ENCODE measurements at regions of chr13 and their contacts with region 1.

Region 1: DNA sequence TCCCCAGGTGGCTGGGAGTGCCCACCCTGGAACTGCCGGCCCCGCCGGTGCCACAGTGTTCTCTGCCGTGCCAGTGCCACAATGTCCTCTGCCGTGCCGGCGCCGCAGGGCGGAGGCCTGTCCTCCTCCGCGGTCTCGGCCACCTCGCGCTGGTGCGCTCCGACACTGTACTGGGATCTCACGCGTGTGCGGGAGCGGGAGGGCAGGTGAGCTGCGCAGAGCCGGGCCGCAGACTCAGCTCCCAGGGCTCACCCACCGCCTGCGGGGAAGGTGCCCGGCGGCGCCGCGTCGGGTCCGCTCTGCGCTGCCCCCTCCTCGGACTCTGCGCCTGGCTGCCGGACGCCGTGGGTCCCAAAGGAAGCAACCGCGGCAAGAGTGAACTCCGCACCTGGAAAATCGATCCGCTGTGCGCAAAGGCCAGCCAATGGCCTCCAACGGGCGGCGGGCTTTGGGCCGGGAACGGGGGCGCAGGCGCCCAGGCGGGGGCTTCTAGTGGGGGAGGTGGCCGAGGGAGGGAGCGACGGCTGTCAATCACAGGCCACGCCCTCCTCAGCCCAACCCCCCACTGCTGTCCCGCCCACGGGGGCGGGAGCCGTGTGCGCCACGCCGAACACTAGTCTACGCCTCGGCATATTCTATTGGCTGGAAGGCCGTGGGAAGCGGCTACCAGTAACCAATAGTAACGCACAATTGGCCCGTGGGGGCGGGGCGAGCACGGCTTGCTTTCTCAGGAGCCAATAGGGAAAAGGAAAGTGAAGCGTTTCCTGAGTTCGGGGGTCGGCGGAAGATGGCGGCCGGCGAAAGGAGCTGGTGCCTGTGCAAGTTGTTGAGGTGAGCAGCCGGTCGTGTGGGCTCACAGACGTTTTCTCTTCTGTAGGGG is at the start of gene ALG11:
- DNase-seq: peak; percentile 99
- ATAC-seq: peak; percentile 98
- H3K4me3 ChIP-seq: peak within 1 kb of the TSS; percentile 84 to 92 (median 88)
- H3K27ac ChIP-seq: peak within 1 kb of the TSS; percentile 83 to 90 (median 86)
- H3K4me1 ChIP-seq: peaks cover 24 to 25% of the 10 kb centered on the region in 2 donors
- H3K27me3 ChIP-seq: no peaks in the 10 kb centered on the region
- CTCF ChIP-seq: peak in 1 of 5 experiments; percentile 23
- POLR2A ChIP-seq: peak; percentile 44 to 64
- total RNA-seq, gene ALG11: 8.9 to 14.2 (median 10.1) TPM

Region 2: GRCh38 chr13:52194184-52194868 is 182.5 kb after region 1 on chr13:
- in situ Hi-C with region 1: no loop called
- intact Hi-C with region 1: loop called (anchors 2 kb)
- DNase-seq: peak; percentile 69 to 81
- ATAC-seq: peak; percentile 93 to 94
- H3K4me3 ChIP-seq: peak overlapping the region; percentile 74 to 98 (median 88)
- H3K27ac ChIP-seq: peak overlapping the region; percentile 81 to 88 (median 87)
- H3K4me1 ChIP-seq: peaks cover 11 to 25% of the 10 kb centered on the region in 2 donors
- H3K27me3 ChIP-seq: no peaks in the 10 kb centered on the region
- CTCF ChIP-seq: no peak
- POLR2A ChIP-seq: peak in 1 of 2 donors; percentile 22

Region 3: GRCh38 chr13:52428295-52428694 is 416.4 kb after region 1 on chr13:
- in situ Hi-C with region 1: loop called in 1 of 4 experiments (anchors 25 kb)
- intact Hi-C with region 1: no loop called
- DNase-seq: no peak
- ATAC-seq: peak; percentile 50 to 61
- H3K4me3 ChIP-seq: no peak overlapping the region
- H3K27ac ChIP-seq: peak overlapping the region in 1 of 4 donors; percentile 20
- H3K4me1 ChIP-seq: no peaks in the 10 kb centered on the region
- H3K27me3 ChIP-seq: no peaks in the 10 kb centered on the region
- CTCF ChIP-seq: no peak
- POLR2A ChIP-seq: no peak

Measured in gastrocnemius medialis (tissue), 4 donors.